ENCODE measurements at regions of chr17 and their contacts with region 1.

Region 1: GRCh38 chr17:80892019-80892855 is 99.4 kb upstream of the CHMP6 start:
- DNase-seq: peak; percentile 95
- H3K4me3 Mint-ChIP-seq: peak overlapping the region; percentile 82
- H3K27ac Mint-ChIP-seq: peak overlapping the region; percentile 93
- H3K4me1 Mint-ChIP-seq: peaks cover 69% of the 10 kb centered on the region
- H3K27me3 Mint-ChIP-seq: no peaks in the 10 kb centered on the region

Region 2: GRCh38 chr17:80605326-80606066 is 286.7 kb before region 1 on chr17:
- intact Hi-C with region 1: loop called (anchors 10 kb)
- DNase-seq: peak; percentile 74
- H3K4me3 Mint-ChIP-seq: peak overlapping the region; percentile 17
- H3K27ac Mint-ChIP-seq: peak overlapping the region; percentile 86
- H3K4me1 Mint-ChIP-seq: peaks cover 56% of the 10 kb centered on the region
- H3K27me3 Mint-ChIP-seq: no peaks in the 10 kb centered on the region

Region 3: DNA sequence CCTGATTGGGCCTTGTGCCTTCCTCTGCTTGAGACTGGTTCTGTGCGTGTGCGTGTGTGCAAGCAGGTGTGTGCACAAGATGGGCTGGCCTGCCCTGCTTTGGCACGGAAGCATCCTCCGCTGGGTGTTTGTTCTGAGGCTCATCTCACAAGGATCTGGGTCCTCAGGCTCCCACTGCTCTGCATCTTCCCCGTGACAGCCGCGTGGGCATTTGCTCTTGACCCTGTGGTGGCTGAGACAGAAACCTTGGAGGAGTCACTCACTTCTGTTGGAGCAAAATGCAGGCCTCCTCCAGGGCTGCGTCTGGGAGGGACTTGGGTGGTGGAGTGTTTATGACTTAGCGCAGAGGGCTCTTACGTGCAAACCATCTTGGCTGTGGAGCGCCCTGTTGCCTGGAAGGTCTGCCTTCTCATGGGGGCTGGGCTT is 228.4 kb before region 1 on chr17:
- intact Hi-C with region 1: loop called (anchors 1 kb)
- DNase-seq: peak; percentile 84
- H3K4me3 Mint-ChIP-seq: peak overlapping the region; percentile 68
- H3K27ac Mint-ChIP-seq: peak overlapping the region; percentile 89
- H3K4me1 Mint-ChIP-seq: peaks cover 68% of the 10 kb centered on the region
- H3K27me3 Mint-ChIP-seq: no peaks in the 10 kb centered on the region

Region 4: DNA sequence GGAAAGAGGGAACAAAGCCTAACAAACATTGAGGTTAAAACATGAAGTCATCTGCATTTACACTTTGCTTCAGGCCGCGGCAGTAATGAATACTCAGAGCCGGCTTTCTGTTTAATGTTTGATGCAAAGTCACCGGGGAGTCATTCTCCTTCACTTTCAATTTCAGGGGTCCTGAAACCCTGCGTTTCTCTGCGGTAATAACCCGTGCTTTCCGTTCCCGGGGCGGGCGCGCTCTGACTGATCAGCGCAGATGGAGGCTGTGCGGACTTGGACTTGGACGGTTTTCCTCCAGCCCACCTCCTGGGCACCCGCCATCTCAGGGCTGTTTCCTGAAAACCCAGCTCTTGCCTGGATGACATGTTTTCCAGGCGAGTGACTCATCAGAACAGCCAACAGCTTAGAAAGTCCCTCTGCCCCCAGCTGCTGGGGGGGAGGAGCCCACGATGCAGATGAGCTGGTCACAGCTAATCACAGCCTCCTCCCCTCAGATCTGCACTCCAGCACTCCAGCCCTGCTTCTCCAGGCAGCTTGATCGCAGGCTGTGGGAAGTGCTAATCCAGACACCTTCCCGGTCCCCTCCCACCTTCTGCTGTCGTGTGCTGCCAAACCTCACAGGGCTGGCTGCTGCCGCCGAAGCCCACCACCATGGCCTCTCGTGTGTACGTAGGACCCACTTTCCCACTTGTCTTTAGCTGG is 59.2 kb before region 1 on chr17:
- intact Hi-C with region 1: loop called (anchors 1 kb)
- DNase-seq: peak; percentile 95
- H3K4me3 Mint-ChIP-seq: peak overlapping the region; percentile 85
- H3K27ac Mint-ChIP-seq: peak overlapping the region; percentile 96
- H3K4me1 Mint-ChIP-seq: peaks cover 61% of the 10 kb centered on the region
- H3K27me3 Mint-ChIP-seq: no peaks in the 10 kb centered on the region

Region 5: DNA sequence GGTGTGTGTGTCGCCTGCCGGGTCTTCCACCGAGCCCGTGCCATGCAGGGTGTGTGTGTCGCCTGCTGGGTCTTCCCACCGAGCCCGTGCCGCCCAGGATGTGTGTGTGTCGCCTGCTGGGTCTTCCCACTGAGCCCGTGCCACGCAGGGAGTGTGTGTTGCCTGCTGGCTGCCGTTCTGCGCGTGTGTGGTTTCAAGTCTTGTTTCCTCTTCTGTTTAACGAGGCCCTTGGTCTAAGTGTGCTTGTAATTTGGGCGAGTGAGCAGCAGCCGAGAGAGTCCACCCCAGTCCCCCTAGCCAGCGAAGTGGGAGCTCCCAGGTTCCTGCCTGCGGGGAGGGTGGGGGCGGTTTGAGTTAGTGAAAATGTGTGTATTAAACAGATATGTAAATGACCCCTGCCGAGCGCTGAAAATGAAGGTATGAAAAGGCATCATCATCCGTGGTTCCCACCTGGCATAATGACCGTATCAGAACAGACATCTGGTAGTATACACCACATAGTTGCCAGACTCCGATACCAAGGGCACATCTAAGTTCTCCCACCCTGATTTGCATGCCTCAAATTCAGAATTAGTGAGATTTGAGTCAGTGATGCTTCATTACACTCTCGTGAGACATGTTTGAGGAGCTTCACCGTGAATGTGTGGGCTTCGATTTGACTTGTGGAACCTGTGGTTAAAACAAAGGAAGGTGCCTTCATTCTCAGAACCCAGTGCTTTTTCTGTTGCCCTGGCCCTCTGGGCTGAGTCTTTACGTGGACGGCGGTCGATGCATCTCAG is 15.1 kb before region 1 on chr17:
- intact Hi-C with region 1: loop called (anchors 1 kb)
- DNase-seq: peak; percentile 89
- H3K4me3 Mint-ChIP-seq: peak overlapping the region; percentile 88
- H3K27ac Mint-ChIP-seq: peak overlapping the region; percentile 99
- H3K4me1 Mint-ChIP-seq: peaks cover 57% of the 10 kb centered on the region
- H3K27me3 Mint-ChIP-seq: no peaks in the 10 kb centered on the region

Region 6: DNA sequence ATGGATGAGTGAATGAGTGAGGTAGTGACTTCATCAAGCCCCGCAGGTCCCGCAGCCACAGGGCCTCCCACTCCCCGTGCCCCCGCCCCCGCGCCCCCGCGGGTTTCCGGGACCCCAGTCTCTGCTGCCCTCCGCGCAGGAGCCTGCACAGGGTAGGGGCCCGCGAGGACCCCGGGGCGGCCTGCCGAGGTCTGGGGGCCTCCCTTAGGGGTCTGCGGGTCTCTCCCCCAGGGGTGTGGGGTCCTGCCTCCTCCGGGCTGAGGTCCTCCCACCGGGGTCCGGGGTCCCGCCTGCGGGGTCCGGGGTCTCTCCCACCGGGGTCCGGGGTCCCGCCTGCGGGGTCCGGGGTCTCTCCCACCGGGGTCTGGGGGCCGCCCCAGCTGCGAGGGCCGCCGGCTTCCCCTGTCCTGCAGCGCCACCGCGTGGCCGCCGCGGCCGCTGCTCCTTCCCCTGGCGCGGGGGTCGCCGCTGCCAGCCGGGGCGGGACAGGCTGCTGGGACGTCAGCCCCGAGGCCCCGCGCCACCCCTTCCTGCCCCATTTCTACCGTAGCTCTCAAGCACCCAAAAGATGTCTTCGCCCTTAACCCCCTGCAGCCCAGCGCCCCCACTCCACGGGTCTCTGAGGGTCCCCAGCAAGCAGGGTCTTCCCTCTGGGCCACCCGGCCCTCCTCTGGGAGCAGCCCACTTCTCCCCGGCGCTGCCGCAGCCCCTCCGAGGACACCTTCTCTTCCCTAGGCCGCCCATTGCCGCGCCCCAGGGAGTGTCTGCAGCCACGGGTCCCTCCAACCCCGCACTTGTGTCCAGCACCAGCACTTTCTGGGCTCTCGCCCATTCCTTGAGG is 89.0 kb after region 1 on chr17:
- intact Hi-C with region 1: no loop called
- DNase-seq: peak; percentile 84
- H3K4me3 Mint-ChIP-seq: peak overlapping the region; percentile 38
- H3K27ac Mint-ChIP-seq: peak overlapping the region; percentile 54
- H3K4me1 Mint-ChIP-seq: peaks cover 8% of the 10 kb centered on the region
- H3K27me3 Mint-ChIP-seq: peaks cover 8% of the 10 kb centered on the region